ENCODE measurements at regions of chr10 and their contacts with region 1.

Region 1: GRCh38 chr10:99711129-99711719 is 20.7 kb downstream of the COX15 start:
- DNase-seq: peak; percentile 16 to 57
- ATAC-seq: peak; percentile 91 to 93
- H3K4me3 ChIP-seq: no peak overlapping the region
- H3K27ac ChIP-seq: no peak overlapping the region
- H3K4me1 ChIP-seq: peaks cover 19% of the 10 kb centered on the region
- CTCF ChIP-seq: peak; percentile 65
- EP300 ChIP-seq: no peak
- POLR2A ChIP-seq: no peak
- RAD21 ChIP-seq: peak; percentile 63 to 75

Region 2: GRCh38 chr10:99630439-99630838 is 80.8 kb before region 1 on chr10:
- CTCF ChIA-PET with region 1: interaction called, 12 read pairs
- POLR2A ChIA-PET with region 1: no interaction called
- DNase-seq: peak in 1 of 2 experiments; percentile 51
- ATAC-seq: peak; percentile 56 to 80; a peak in 5 of 6 replicates
- H3K4me3 ChIP-seq: no peak overlapping the region
- H3K27ac ChIP-seq: 0 out of 6 replicates have a peak overlapping the region, but pooled peaks of 1 of the 2 experiments have one; percentile 16
- H3K4me1 ChIP-seq: peaks cover 6% of the 10 kb centered on the region; the same call in 1 of the 3 replicates
- CTCF ChIP-seq: peak; percentile 54
- EP300 ChIP-seq: no peak
- POLR2A ChIP-seq: no peak
- RAD21 ChIP-seq: peak; percentile 57 to 72

Region 3: GRCh38 chr10:99700649-99701048 is 10.6 kb before region 1 on chr10:
- CTCF ChIA-PET with region 1: interaction called, 26 read pairs
- POLR2A ChIA-PET with region 1: no interaction called
- DNase-seq: no peak
- ATAC-seq: no peak
- H3K4me3 ChIP-seq: no peak overlapping the region
- H3K27ac ChIP-seq: no peak overlapping the region
- H3K4me1 ChIP-seq: no peaks in the 10 kb centered on the region
- CTCF ChIP-seq: no peak
- EP300 ChIP-seq: no peak
- POLR2A ChIP-seq: no peak
- RAD21 ChIP-seq: no peak

Region 4: DNA sequence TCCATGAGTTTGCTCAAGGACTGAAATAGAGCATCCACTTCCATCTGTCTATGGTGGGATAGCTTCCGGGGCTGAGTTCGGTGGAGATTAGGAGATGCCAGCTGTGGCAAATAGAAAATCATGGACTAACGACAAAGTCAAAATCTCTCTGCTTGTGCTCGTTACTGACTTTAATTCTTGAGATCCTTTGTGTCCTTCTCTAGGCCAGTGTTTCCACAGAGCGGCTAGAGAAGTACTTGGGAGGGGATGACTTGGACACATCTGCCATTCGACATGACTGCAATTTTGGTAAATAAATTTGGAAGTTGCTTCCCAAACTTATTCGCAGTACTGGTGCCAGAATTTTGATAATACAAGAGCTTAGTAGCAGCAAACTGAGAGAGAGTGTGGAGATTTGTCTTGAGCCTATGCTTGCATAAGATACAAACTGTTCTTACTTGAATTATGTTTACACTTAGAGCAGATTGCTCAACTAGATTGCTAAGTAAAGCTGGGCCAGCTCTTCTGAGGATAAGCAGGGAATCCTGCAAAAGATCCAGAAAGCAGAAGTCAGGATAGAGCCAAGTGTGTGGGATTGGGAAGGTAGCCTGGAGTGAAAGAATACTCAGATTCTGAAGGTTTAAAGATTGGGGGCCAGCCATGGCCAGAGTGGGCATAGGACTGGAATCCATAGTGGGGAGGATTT is 98.8 kb after region 1 on chr10:
- CTCF ChIA-PET with region 1: no interaction called
- POLR2A ChIA-PET with region 1: no interaction called
- DNase-seq: no peak
- ATAC-seq: no peak
- H3K4me3 ChIP-seq: no peak overlapping the region
- H3K27ac ChIP-seq: no peak overlapping the region; a peak in 1 of 6 replicates
- H3K4me1 ChIP-seq: peaks cover 6% of the 10 kb centered on the region; the same call in 1 of the 3 replicates
- CTCF ChIP-seq: no peak
- EP300 ChIP-seq: no peak
- POLR2A ChIP-seq: no peak
- RAD21 ChIP-seq: no peak